Cardiac septum (tissue), 1 donor: ENCODE measurements at regions of chr11 and their contacts with region 1.

Region 1: DNA sequence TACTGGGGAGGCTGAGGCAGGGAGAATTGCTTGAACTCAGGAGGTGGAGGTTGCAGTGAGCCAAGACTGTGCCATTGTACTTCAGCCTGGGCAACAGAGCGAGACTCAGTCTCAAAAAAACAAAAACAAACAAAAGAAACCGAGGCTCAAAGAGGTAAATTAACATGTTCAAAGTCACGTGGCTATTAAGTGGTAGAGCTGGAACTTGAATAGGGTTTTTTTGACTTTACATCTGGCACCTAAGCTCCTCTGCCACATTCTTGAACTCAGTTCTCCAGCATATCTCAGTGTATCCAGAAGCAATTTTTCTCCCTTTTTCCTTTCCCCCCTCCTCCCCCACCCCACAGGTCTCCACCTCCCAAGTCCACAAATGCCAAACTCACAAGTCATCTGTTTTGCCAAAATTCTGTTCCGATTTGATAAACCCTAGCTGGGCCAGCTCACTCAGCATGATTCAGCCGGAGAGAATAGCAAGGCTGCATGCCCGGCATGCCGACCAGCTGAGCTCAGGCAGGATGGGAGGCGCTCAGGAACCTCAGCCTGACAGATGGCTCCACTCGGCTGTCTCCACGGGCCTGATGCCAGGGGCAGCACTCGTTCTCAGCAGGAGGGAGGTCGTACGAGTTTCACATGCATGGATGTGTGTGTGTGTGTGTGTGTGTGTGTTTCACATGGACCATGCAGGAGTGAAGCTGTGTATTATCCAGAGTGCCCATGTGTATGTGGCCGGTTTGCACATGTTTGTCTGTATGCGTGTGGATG is 63.2 kb upstream of the RRAS2 start:
- DNase-seq: peak; percentile 89

Region 2: DNA sequence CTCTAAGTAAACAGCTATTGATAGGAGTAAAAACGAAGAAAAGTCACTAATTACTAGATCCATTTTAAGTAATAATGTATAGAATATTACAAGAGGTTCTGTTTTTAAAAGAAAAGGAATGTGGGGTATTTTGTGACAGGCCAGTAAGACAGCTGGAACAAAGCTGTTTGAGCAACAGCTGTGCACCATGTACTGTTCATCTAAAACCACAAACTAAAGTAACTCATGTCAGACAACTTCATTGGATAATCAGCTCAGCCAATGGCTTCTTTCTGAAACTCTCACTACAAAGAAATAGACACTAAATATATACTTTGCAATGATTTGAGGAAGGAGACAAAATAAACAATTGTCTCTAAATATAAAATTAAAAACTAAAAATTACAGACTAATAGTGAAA is 79.3 kb before region 1 on chr11:
- intact Hi-C with region 1: no loop called
- DNase-seq: no peak

Region 3: DNA sequence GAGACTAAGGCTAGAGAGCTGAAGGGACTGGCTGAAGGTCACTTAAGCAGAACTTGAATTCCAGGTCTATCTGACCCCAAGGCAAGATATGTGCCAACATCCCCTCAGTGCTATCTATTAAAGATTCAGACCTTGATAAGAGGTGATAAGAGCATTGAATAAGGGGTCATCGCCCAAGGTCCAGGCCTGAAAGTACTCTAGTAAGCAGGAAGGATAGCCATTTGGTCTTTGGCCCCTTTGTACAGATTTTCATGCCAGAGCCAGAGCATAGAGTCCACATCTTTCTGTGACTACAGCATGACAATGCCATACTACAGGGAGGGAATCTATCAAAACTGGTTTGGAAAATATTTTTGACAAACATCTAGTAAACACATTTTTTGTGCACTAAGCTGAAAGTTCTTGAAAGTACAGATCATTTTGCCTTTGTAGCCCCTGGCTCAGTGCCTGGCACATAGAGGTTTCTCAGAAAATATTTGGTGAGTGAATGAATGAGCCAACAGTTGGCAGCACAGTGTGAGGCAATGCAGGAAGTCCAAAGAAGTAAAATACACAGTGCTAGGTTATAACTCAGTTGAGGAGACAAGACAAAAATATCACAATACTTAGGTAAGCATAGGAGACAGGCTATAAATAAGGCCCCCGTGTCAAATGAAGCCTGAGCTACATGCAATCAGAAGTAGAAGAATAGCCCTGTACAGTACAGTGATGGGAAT is 48.1 kb before region 1 on chr11:
- intact Hi-C with region 1: loop called (anchors 2 kb)
- DNase-seq: no peak

Region 4: GRCh38 chr11:14463623-14464022 is 41.4 kb after region 1 on chr11:
- intact Hi-C with region 1: no loop called
- DNase-seq: no peak

Region 5: GRCh38 chr11:14611939-14612338 is 189.7 kb after region 1 on chr11:
- intact Hi-C with region 1: no loop called
- DNase-seq: no peak